ENCODE measurements at regions of chr2 and their contacts with region 1.

Region 1: GRCh38 chr2:169159686-169160085 is 90.3 kb downstream of the DHRS9 start:
- H3K4me3 ChIP-seq: no peak overlapping the region
- H3K27ac ChIP-seq: no peak overlapping the region
- H3K4me1 ChIP-seq: no peaks in the 10 kb centered on the region
- CTCF ChIP-seq: no peak

Region 2: GRCh38 chr2:169141713-169142352 is 17.9 kb before region 1 on chr2:
- CTCF ChIA-PET with region 1: interaction called, 17 read pairs
- POLR2A ChIA-PET with region 1: no interaction called
- H3K4me3 ChIP-seq: no peak overlapping the region
- H3K27ac ChIP-seq: no peak overlapping the region
- H3K4me1 ChIP-seq: no peaks in the 10 kb centered on the region
- CTCF ChIP-seq: peak; percentile 53